Naive thymus-derived CD4-positive, alpha-beta T cell (primary cell): ENCODE measurements at regions of chr17 and their contacts with region 1.

Region 1: GRCh38 chr17:80832888-80833583 is 158.6 kb upstream of the CHMP6 start:
- DNase-seq: peak; percentile 43 to 83 (median 67)
- ATAC-seq: peak; percentile 93
- H3K4me3 ChIP-seq: peak overlapping the region; percentile 36
- H3K4me3 Mint-ChIP-seq: peak overlapping the region; percentile 74 to 89 (median 88)
- H3K27ac ChIP-seq: peak overlapping the region; percentile 80
- H3K27ac Mint-ChIP-seq: peak overlapping the region; percentile 83 to 99 (median 94)
- H3K4me1 ChIP-seq: peaks cover 9 to 12% of the 10 kb centered on the region in 2 donors
- H3K4me1 Mint-ChIP-seq: peaks cover 13 to 67% (median 40%) of the 10 kb centered on the region in 7 donors
- H3K27me3 ChIP-seq: no peaks in the 10 kb centered on the region
- H3K27me3 Mint-ChIP-seq: no peaks in the 10 kb centered on the region

Region 2: GRCh38 chr17:80694992-80695912 is 137.8 kb before region 1 on chr17:
- CTCF ChIA-PET with region 1: no interaction called
- POLR2A ChIA-PET with region 1: no interaction called
- intact Hi-C with region 1: no loop called
- DNase-seq: peak in 1 of 9 donors; percentile 24
- ATAC-seq: no peak
- H3K4me3 ChIP-seq: no peak overlapping the region
- H3K4me3 Mint-ChIP-seq: peak overlapping the region in 5 of 10 donors; percentile 12 to 60 (median 45)
- H3K27ac ChIP-seq: no peak overlapping the region
- H3K27ac Mint-ChIP-seq: peak overlapping the region; percentile 38 to 88 (median 76)
- H3K4me1 ChIP-seq: no peaks in the 10 kb centered on the region
- H3K4me1 Mint-ChIP-seq: peaks cover 20 to 79% (median 60%) of the 10 kb centered on the region in 7 donors
- H3K27me3 ChIP-seq: no peaks in the 10 kb centered on the region
- H3K27me3 Mint-ChIP-seq: no peaks in the 10 kb centered on the region

Region 3: DNA sequence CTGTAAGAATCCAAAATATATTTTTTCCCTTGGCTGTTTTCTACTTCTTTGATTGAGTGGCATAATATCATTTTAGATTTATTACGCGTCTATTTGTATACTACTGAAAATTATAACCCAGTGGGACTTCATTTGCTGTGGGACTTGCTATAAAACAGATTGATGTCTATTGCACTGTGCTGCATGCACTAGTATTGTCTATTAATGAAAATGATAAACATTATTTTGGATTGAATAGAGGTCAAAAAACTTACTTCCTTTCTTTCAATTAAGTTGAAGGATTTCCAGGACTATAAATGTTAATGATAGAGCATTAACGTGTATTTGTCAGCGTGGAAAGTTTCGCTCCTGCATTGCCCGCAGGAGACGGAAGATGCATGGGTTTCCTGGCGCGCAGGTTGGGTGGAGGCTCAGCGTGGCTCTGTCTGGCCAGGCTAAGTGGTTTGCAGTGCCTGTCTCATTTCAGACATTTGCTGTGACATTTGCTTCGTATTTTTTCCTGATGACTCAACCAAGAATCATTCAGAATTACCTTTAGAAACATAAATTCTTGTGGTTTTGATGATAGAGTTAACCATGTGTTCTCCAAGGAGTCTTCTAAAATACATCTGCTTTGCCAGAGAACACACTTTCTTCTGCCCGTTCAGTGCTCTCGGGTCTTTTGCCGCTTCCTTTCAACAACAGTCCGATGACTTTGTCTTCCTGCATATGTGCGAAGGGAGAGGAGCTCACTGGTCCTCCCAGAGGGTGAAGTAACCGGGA is 71.7 kb before region 1 on chr17:
- CTCF ChIA-PET with region 1: no interaction called
- POLR2A ChIA-PET with region 1: interaction called, 6 read pairs
- intact Hi-C with region 1: loop called in 1 of 2 experiments (anchors 2 kb)
- DNase-seq: peak in 5 of 9 donors; percentile 34 to 73 (median 41)
- ATAC-seq: peak; percentile 45
- H3K4me3 ChIP-seq: peak overlapping the region; percentile 28
- H3K4me3 Mint-ChIP-seq: peak overlapping the region; percentile 60 to 84 (median 80)
- H3K27ac ChIP-seq: peak overlapping the region; percentile 81
- H3K27ac Mint-ChIP-seq: peak overlapping the region; percentile 87 to 98 (median 94)
- H3K4me1 ChIP-seq: peaks cover 34 to 68% of the 10 kb centered on the region in 2 donors
- H3K4me1 Mint-ChIP-seq: peaks cover 59 to 94% (median 84%) of the 10 kb centered on the region in 7 donors
- H3K27me3 ChIP-seq: no peaks in the 10 kb centered on the region
- H3K27me3 Mint-ChIP-seq: no peaks in the 10 kb centered on the region

Region 4: DNA sequence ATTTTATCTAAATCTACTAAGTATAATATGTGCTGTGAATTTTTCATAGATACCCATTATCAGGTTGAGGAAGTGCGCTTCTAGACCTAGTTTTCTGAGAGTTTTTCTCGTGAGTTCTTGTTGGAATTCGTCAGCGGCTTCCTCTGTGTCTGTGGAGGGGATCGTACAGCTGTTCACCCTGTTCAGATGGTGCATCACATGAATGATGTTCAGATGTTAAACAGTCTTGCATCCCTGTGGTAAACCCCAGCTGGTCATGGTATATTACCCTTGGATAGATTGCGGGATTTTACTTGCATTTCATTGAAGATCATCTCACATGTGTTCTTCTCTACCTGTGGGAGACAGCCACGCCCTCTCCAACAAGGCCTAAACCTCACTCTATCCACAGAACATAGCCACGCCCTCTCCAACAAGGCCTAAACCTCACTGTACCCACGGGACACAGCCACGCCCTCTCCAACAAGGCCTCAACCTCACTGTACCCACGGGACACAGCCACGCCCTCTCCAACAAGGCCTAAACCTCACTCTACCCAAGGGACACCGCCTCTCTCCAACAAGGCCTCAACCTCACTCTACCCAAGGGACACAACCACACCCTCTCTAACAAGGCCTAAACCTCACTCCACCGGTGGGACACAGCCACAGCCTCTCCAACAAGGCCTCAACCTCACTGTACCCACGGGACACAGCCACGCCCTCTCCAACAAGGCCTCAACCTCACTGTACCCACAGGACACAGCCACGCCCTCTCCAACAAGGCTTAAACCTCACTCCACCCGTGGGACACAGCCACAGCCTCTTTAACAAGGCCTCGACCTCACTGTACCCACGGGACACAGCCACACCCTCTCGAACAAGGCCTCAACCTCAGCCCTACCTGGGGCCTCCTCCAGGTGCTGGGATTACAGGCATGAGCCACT is 21.6 kb before region 1 on chr17:
- CTCF ChIA-PET with region 1: no interaction called
- POLR2A ChIA-PET with region 1: interaction called, 15 read pairs
- intact Hi-C with region 1: no loop called
- DNase-seq: peak in 1 of 9 donors; percentile 21
- ATAC-seq: peak; percentile 31
- H3K4me3 ChIP-seq: no peak overlapping the region
- H3K4me3 Mint-ChIP-seq: peak overlapping the region; percentile 30 to 76 (median 68)
- H3K27ac ChIP-seq: peak overlapping the region; percentile 66
- H3K27ac Mint-ChIP-seq: peak overlapping the region; percentile 83 to 99 (median 94)
- H3K4me1 ChIP-seq: peaks cover 15 to 21% of the 10 kb centered on the region in 2 donors
- H3K4me1 Mint-ChIP-seq: peaks cover 23 to 63% (median 60%) of the 10 kb centered on the region in 7 donors
- H3K27me3 ChIP-seq: no peaks in the 10 kb centered on the region
- H3K27me3 Mint-ChIP-seq: no peaks in the 10 kb centered on the region

Region 5: DNA sequence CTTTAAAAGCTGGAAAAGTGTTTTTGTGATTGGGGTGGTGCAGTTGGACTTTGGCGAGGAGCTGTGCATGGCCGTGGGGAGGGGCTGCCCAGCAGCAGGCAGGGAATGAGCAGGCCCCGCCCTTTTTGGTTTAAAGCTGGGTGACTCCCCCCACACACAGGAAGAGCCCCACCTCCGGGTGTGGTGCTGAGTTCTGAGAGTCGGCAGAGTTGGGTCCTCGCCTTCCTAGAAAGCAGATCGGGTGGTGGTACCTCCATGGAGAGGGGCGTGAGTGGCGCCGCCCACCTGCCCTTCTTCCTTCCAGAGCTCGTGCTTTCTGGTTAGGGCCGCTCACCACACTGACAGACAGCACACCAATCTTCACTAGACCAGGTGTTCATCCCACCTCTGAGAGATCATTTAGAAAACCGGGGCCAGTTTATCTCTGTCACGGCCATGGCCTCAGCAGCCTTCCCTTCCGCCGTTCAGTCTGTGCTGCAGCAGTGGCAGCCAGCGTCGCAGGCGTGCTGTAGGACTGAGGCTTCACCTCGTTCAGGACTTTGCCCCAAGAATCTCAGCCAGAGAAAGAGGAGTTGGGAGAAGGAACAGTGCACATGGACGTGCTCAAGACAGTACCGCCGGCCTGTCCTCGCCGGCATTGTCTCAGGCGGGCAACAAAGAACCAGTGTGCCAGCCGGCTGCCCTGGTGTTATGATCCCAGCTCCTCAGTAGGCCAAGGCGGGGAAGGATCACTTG is 14.6 kb after region 1 on chr17:
- CTCF ChIA-PET with region 1: no interaction called
- POLR2A ChIA-PET with region 1: interaction called, 15 read pairs
- intact Hi-C with region 1: loop called (anchors 1 kb)
- DNase-seq: peak in 8 of 9 donors; percentile 33 to 67 (median 58)
- ATAC-seq: peak; percentile 89
- H3K4me3 ChIP-seq: peak overlapping the region; percentile 9
- H3K4me3 Mint-ChIP-seq: peak overlapping the region; percentile 52 to 88 (median 80)
- H3K27ac ChIP-seq: peak overlapping the region; percentile 77
- H3K27ac Mint-ChIP-seq: peak overlapping the region; percentile 61 to 97 (median 94)
- H3K4me1 ChIP-seq: peaks cover 15 to 50% of the 10 kb centered on the region in 2 donors
- H3K4me1 Mint-ChIP-seq: peaks cover 35 to 69% (median 67%) of the 10 kb centered on the region in 7 donors
- H3K27me3 ChIP-seq: no peaks in the 10 kb centered on the region
- H3K27me3 Mint-ChIP-seq: no peaks in the 10 kb centered on the region

Region 6: DNA sequence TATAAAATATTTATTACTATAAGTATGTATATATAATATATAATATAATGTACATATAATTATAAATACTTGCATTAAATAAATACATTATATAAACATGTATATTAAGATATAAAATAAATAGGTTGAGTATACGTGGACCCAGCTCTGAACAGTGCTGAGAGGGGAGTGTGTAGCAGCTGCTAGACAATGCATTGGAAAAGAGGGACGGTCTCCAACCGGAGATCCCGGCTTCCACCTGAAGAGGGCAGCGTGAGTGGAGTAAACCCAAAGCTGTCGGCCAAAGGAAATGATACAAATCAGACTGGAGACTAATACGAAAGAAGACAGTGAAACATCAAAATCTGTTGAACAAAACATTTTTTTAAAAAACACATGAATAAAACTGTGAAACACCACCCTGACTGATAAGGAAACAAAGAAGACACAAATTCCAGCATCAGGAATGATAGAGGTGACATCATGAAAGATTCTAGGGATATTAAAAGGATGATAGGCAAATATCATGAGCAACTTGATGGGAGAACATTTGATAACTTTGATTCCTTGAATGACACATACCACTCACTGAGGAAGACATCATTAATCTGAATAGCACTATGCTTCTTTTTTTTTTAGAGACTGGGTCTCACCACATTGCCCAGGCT is 33.2 kb after region 1 on chr17:
- CTCF ChIA-PET with region 1: no interaction called
- POLR2A ChIA-PET with region 1: no interaction called
- intact Hi-C with region 1: loop called in 1 of 2 experiments (anchors 2 kb)
- DNase-seq: peak in 7 of 9 donors; percentile 28 to 68 (median 41)
- ATAC-seq: peak; percentile 78
- H3K4me3 ChIP-seq: no peak overlapping the region
- H3K4me3 Mint-ChIP-seq: peak overlapping the region in 2 of 10 donors; percentile 46 to 69
- H3K27ac ChIP-seq: no peak overlapping the region
- H3K27ac Mint-ChIP-seq: peak overlapping the region in 7 of 9 donors; percentile 9 to 88 (median 62)
- H3K4me1 ChIP-seq: peaks cover 0 to 26% of the 10 kb centered on the region in 2 donors
- H3K4me1 Mint-ChIP-seq: peaks cover 43 to 86% (median 71%) of the 10 kb centered on the region in 7 donors
- H3K27me3 ChIP-seq: no peaks in the 10 kb centered on the region
- H3K27me3 Mint-ChIP-seq: no peaks in the 10 kb centered on the region

Region 7: DNA sequence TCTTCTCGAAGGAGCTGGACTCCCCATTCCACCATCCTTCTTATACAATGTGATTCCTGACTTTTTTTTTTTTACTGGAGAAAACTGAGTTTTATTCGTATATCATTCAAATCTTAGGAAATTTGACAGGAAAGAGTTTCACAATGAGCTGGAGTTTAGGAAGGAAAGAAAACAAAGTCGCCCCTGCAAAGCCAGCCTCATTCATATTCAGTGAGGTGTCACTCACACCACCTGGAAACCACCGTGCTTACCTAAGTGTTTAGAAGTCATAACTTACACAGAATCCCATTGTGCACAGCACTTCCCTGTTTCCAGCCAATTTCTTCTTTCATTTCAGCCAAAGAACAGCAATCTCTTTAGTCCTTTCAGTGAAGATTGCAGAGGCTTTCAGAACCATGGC is 68.3 kb after region 1 on chr17:
- CTCF ChIA-PET with region 1: no interaction called
- POLR2A ChIA-PET with region 1: no interaction called
- intact Hi-C with region 1: no loop called
- DNase-seq: no peak
- ATAC-seq: no peak
- H3K4me3 ChIP-seq: no peak overlapping the region
- H3K4me3 Mint-ChIP-seq: no peak overlapping the region
- H3K27ac ChIP-seq: no peak overlapping the region
- H3K27ac Mint-ChIP-seq: peak overlapping the region in 3 of 9 donors; percentile 42 to 85 (median 63)
- H3K4me1 ChIP-seq: peaks cover 4 to 6% of the 10 kb centered on the region in 2 donors
- H3K4me1 Mint-ChIP-seq: peaks cover 5 to 48% (median 10%) of the 10 kb centered on the region in 7 donors
- H3K27me3 ChIP-seq: no peaks in the 10 kb centered on the region
- H3K27me3 Mint-ChIP-seq: no peaks in the 10 kb centered on the region

Region 8: DNA sequence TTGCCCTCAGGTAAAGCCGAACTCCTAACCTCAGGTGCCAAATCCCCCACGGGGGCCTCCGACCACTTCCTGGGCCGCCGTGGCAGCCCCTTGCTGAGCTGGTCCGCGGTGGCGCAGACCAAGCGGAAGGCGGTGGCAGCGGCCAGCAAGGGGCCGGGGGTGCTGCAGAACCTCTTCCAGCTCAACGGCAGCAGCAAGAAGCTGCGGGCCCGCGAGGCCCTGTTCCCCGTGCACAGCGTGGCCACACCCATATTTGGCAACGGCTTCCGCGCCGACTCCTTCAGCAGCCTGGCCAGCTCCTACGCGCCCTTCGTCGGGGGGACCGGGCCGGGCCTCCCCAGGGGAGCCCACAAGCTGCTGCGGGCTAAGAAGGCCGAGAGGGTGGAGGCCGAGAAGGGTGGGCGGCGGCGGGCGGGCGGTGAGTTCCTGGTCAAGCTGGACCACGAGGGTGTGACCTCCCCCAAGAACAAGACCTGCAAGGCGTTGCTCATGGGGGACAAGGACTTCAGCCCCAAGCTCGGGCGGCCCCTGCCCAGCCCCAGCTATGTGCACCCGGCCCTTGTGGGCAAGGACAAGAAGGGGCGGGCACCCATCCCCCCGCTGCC is 627.9 kb after region 1 on chr17:
- CTCF ChIA-PET with region 1: no interaction called
- POLR2A ChIA-PET with region 1: no interaction called
- intact Hi-C with region 1: no loop called
- DNase-seq: no peak
- ATAC-seq: peak; percentile 69
- H3K4me3 ChIP-seq: no peak overlapping the region
- H3K4me3 Mint-ChIP-seq: no peak overlapping the region
- H3K27ac ChIP-seq: no peak overlapping the region
- H3K27ac Mint-ChIP-seq: no peak overlapping the region
- H3K4me1 ChIP-seq: no peaks in the 10 kb centered on the region
- H3K4me1 Mint-ChIP-seq: peaks cover 0 to 8% (median 0%) of the 10 kb centered on the region in 7 donors
- H3K27me3 ChIP-seq: no peaks in the 10 kb centered on the region
- H3K27me3 Mint-ChIP-seq: no peaks in the 10 kb centered on the region